ENCODE measurements at regions of chr11 and their contacts with region 1.

Region 1: DNA sequence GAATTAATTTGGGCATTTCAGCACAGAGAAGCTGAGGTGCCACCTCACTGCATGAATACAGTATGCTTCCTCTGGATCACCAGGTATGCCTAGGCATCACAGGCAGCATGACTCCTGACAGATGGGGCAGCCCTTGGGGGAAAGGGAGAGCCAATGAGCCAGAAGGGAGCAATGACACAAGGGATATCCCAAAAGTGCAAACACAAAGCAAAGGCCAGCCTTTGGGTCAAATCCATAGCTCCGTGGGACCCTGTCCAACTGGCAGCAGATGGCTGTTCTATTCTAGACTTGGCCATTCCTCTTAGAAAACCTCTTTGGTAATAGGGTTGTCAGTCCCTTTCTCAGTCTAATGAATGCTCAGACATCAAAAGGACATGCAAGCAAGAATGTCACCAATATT is 73.3 kb downstream of the SERGEF start:
- DNase-seq: no peak
- H3K4me3 ChIP-seq: no peak overlapping the region
- H3K27ac ChIP-seq: no peak overlapping the region
- H3K4me1 ChIP-seq: no peaks in the 10 kb centered on the region
- H3K27me3 ChIP-seq: no peaks in the 10 kb centered on the region
- CTCF ChIP-seq: no peak
- EP300 ChIP-seq: no peak
- POLR2A ChIP-seq: no peak

Region 2: GRCh38 chr11:17927681-17928347 is 11.7 kb before region 1 on chr11:
- intact Hi-C with region 1: loop called (anchors 2 kb)
- DNase-seq: no peak
- H3K4me3 ChIP-seq: no peak overlapping the region
- H3K27ac ChIP-seq: no peak overlapping the region
- H3K4me1 ChIP-seq: peaks cover 0 to 7% (median 0%) of the 10 kb centered on the region in 4 donors
- H3K27me3 ChIP-seq: no peaks in the 10 kb centered on the region
- CTCF ChIP-seq: no peak
- EP300 ChIP-seq: no peak
- POLR2A ChIP-seq: no peak

Measured in sigmoid colon (tissue), 7 donors.